ENCODE measurements at regions of chrX and their contacts with region 1.

Region 1: DNA sequence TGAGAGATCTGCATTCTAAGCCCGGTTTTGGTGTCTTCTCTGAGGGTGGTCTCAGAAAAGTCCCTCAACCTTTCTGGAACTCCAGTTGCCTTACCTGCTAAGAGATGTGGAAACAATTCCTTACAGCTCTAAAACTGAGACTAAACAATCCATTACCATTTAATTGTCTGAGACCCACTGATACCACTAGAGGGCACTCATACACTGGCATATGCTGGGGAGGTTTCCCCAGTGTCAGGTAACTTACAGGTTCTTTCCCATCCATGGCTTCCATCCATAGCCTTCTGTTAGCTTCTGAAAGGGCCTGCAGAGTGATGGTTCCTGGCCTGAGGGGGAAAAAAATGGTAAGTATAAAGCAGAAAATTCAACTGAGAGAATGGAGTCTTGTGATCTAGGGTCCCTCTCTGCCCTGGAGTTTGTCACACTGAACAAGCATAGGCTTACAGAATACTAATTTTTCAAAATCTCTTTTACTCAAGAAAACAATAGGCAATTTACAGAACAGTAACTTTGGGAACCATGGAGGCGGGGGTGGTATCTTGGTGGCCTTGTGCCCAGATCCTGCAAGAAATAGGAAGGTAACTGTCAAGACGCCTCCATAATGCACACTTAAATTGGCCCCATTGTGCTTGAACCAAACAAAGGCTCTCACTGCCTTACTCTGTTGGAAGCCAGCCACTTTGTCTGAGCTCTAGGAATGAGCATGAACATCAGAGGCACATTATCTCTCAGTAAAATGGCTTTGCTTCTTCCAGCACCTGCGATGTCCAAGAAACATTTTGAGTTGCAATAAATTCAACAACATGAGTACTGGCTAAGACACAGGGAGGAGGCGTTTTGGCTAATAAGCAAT is 236.1 kb downstream of the OPHN1 start:
- DNase-seq: peak; percentile 12 to 49
- ATAC-seq: peak; percentile 54 to 86 (median 63)
- H3K4me3 ChIP-seq: no peak overlapping the region
- H3K4me3 Mint-ChIP-seq: no peak overlapping the region
- H3K27ac ChIP-seq: no peak overlapping the region
- H3K27ac Mint-ChIP-seq: no peak overlapping the region
- H3K4me1 ChIP-seq: no peaks in the 10 kb centered on the region
- H3K4me1 Mint-ChIP-seq: no peaks in the 10 kb centered on the region
- H3K27me3 ChIP-seq: no peaks in the 10 kb centered on the region
- H3K27me3 Mint-ChIP-seq: peaks cover 6 to 39% of the 10 kb centered on the region in 2 donors
- CTCF ChIP-seq: peak; percentile 63

Region 2: GRCh38 chrX:68462653-68463052 is 265.5 kb after region 1 on chrX:
- intact Hi-C with region 1: loop called (anchors 1 kb)
- DNase-seq: peak in 1 of 2 donors; percentile 51
- ATAC-seq: peak; percentile 46 to 86 (median 82)
- H3K4me3 ChIP-seq: no peak overlapping the region
- H3K4me3 Mint-ChIP-seq: no peak overlapping the region
- H3K27ac ChIP-seq: no peak overlapping the region
- H3K27ac Mint-ChIP-seq: no peak overlapping the region
- H3K4me1 ChIP-seq: no peaks in the 10 kb centered on the region
- H3K4me1 Mint-ChIP-seq: peaks cover 0 to 4% of the 10 kb centered on the region in 2 donors
- H3K27me3 ChIP-seq: no peaks in the 10 kb centered on the region
- H3K27me3 Mint-ChIP-seq: peaks cover 2 to 8% of the 10 kb centered on the region in 2 donors
- CTCF ChIP-seq: peak; percentile 56

Region 3: GRCh38 chrX:68710870-68711576 is 513.9 kb after region 1 on chrX:
- intact Hi-C with region 1: loop called (anchors 10 kb)
- DNase-seq: peak in 1 of 2 donors; percentile 4
- ATAC-seq: no peak
- H3K4me3 ChIP-seq: no peak overlapping the region
- H3K4me3 Mint-ChIP-seq: no peak overlapping the region
- H3K27ac ChIP-seq: no peak overlapping the region
- H3K27ac Mint-ChIP-seq: no peak overlapping the region
- H3K4me1 ChIP-seq: no peaks in the 10 kb centered on the region
- H3K4me1 Mint-ChIP-seq: no peaks in the 10 kb centered on the region
- H3K27me3 ChIP-seq: no peaks in the 10 kb centered on the region
- H3K27me3 Mint-ChIP-seq: no peaks in the 10 kb centered on the region
- CTCF ChIP-seq: no peak

Measured in natural killer cell (primary cell).